AG04450 (cell line): ENCODE measurements at regions of chr22 and their contacts with region 1.

Region 1: DNA sequence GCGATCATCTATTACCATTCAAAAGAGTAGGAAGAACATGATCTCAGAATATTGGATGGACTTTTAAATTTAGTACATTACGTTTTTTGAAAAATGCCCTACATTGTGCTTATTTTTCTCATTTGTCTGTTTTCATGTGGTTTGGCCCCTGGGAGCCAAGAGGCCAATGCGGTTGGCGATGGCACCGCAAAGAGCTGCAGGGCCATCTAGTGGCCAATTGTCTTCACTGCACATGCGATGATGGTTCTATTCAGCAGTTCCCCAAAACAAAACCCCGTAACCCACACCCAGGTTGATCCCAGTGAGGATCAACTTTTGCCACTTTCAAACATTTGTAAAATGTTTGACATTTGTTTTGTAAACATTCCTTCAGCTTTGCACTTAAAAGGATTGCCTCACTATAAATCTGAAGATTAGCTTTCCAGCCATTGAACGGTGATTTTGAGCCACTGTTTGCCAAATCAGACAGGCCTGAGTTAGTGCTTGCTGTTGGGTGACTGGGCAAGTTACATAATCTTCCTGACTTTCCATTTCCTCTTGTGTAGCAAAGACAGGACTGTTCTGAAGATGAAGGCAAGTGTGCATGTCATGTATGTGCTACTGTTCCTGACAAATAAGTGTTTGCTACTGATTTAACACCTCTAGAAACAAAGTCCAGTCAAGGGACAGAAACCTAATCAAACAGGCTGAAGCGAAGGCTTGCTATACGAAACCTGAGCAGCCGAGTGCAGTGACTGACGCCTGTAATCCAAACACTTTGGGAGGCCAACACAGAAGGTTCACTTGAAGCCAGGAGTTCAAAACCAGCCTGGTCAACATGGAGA is 29.2 kb upstream of the XBP1 start:
- DNase-seq: peak; percentile 53
- H3K4me3 ChIP-seq: no peak overlapping the region
- H3K27ac ChIP-seq: no peak overlapping the region
- H3K27me3 ChIP-seq: no peaks in the 10 kb centered on the region
- CTCF ChIP-seq: peak; percentile 97

Region 2: DNA sequence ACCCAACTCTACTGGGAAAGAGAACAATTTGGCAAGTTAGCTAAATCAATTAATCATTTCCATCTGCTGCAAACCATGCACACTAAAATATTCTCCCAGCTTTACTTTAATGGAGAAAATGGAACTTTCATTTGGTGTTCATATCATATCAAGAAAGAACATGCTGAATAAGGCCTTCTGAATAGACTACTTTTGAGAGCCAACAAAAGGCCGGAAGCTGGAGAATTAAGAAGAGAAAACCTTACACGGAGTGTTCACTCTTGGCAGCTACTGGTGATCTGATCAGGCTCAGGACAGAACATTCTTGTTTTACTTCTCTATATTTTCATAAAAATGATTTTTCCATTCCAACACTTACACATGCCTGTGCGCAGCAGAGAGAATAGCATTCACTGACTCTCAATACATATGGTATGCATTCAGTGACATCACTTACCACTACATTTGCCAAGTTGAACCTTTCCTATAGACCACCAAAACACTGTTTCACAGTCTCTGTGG is 315.2 kb before region 1 on chr22:
- CTCF ChIA-PET with region 1: no interaction called
- POLR2A ChIA-PET with region 1: no interaction called
- DNase-seq: no peak
- H3K4me3 ChIP-seq: no peak overlapping the region
- H3K27ac ChIP-seq: no peak overlapping the region
- H3K27me3 ChIP-seq: no peaks in the 10 kb centered on the region
- CTCF ChIP-seq: no peak

Region 3: DNA sequence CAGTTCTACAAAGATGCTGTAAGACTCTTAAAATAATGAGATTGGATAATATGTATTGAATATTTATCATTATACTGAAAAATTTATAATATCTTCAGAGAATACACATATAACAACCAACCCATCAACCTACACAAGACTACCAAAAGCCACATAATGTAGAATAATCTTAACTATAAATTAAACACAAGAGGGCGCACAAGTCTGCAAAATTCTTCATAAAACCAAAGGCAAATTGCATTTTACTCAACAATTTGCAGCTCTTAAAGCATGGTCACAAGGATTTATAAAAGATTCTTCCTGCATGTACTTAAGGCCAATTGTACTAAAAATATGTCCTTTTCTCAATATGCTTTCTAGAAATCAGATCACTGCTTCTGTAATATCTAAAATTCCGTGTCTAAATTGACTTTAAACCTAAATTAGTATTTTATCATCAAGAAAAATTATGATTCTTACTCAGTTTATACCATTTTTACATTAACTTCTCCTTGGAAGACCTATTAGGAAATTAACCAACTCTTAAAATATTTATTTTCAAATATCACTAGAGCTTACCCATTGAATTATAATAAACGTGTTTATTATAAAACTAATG is 228.9 kb before region 1 on chr22:
- CTCF ChIA-PET with region 1: interaction called, 78 read pairs
- POLR2A ChIA-PET with region 1: no interaction called
- DNase-seq: peak; percentile 30
- H3K4me3 ChIP-seq: no peak overlapping the region
- H3K27ac ChIP-seq: no peak overlapping the region
- H3K27me3 ChIP-seq: no peaks in the 10 kb centered on the region
- CTCF ChIP-seq: peak; percentile 44

Region 4: DNA sequence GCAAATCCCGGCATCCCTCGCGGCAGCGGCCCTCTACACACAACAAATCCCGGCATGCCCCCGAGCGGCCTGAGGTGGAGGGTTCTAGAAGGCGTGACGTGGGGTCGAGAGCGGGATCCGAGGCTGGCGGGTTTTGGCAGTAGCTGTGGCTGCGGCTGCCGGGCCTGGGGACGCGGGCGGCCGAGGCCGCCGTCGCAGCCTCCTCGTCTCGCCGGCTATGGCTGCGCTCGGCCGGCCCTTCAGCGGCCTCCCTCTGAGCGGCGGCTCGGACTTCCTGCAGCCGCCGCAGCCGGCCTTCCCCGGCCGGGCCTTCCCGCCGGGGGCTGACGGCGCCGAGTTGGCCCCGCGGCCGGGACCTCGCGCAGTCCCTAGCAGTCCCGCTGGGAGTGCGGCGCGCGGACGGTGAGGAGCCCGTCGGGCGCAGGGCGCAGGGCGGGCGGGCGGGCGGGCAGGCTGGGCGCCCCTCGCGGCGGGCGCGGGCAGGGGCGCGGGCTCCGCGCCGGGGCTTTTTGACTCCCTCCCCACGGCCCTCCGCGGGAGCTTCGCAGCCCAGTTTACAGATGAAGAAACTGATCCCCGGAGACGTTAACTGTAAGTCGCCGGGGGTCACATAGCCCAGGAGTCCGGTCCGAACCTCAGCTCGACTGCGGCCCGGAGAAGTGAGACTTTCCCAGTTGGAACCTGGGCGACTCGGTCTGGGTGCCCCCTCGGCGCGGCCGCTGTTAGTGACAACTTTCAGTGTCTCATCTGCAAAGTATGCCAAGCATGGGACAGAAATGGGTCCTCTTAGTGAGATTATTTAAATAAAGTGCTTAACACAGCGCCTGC is 56.7 kb before region 1 on chr22 and contains the start of gene CCDC117:
- CTCF ChIA-PET with region 1: no interaction called
- POLR2A ChIA-PET with region 1: no interaction called
- DNase-seq: peak; percentile 87
- H3K4me3 ChIP-seq: peak within 1 kb of the TSS; percentile 87
- H3K27ac ChIP-seq: peak within 1 kb of the TSS; percentile 85
- H3K27me3 ChIP-seq: no peaks in the 10 kb centered on the region
- CTCF ChIP-seq: peak; percentile 22; the same call in 1 of the 2 replicates
- polyA plus RNA-seq, gene CCDC117: 15.0 and 24.4 TPM in 2 replicates